Activated B cell treated with CpG ODN at 0.5 μM for 24 hours (primary cell): ENCODE measurements at regions of chr5 and their contacts with region 1.

Region 1: DNA sequence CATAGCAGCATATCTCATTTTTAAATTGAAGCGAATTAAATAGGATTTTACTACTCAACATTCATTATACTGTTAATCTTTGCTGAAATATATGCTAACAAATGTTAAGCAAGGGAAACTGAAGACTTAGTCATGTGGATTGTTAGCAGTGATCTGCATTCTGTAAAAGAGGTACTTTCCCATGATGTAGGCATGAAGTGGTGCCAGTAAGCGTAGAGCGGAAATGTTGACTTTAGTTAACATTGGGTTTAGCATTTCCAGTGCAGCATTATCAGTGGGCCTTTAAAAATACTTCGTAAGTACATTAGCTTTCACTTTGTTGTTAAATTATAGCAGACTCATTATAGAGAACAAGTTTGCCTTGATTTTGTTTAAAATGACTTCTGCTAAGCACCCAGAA is 130.3 kb downstream of the CDC42SE2 start:
- DNase-seq: no peak
- ATAC-seq: peak; percentile 93
- H3K4me3 Mint-ChIP-seq: peak overlapping the region; percentile 73
- H3K27ac Mint-ChIP-seq: peak overlapping the region; percentile 88
- H3K4me1 Mint-ChIP-seq: peaks cover 71% of the 10 kb centered on the region
- H3K27me3 Mint-ChIP-seq: no peaks in the 10 kb centered on the region
- CTCF ChIP-seq: no peak

Region 2: GRCh38 chr5:131170540-131171275 is 223.4 kb before region 1 on chr5 and contains the start of gene LYRM7:
- CTCF ChIA-PET with region 1: no interaction called
- POLR2A ChIA-PET with region 1: interaction called, 4 read pairs
- intact Hi-C with region 1: loop called (anchors 1 kb)
- DNase-seq: peak; percentile 80
- ATAC-seq: peak; percentile 96
- H3K4me3 Mint-ChIP-seq: peak within 1 kb of the TSS; percentile 98
- H3K27ac Mint-ChIP-seq: peak within 1 kb of the TSS; percentile 93
- H3K4me1 Mint-ChIP-seq: peaks cover 42% of the 10 kb centered on the region
- H3K27me3 Mint-ChIP-seq: no peaks in the 10 kb centered on the region
- CTCF ChIP-seq: no peak
- total RNA-seq, gene LYRM7: 11.9 and 13.1 TPM in 2 replicates